H1 (cell line): ENCODE measurements at regions of chr1 and their contacts with region 1.

Region 1: DNA sequence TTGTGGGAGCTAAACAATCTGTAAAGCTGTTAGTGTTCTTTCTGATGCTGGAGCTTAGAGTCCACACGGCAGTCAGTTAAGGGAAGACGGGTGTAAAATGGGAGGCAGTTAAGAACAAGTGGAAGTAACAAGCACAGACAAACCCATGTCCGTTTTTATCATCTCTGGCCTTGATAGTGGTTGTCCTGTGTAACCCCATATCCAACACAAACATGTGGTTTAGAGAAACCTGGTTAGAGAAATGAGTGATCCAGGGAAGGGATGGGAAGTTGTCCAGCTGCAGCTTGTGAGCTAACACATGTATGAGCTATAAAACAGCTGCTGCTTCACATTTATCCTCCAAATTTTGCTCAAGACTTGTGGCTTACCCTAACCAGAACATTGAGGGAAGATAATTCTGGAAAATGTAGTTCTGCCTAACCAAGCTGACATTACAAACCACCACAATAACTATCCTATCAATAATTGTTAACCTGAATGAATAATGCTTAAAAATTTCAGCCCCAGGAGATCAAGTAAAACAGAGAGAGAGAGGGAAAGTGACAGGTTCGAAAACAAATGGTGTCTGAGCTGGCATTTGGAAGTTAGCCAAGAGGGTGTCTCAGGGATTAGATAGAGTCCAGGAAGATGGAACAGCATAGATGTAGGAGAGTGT is 10.6 kb upstream of the C1orf162 start:
- DNase-seq: no peak
- H3K4me3 ChIP-seq: no peak overlapping the region
- H3K27ac ChIP-seq: no peak overlapping the region
- H3K4me1 ChIP-seq: no peaks in the 10 kb centered on the region
- H3K27me3 ChIP-seq: no peaks in the 10 kb centered on the region
- CTCF ChIP-seq: no peak
- EP300 ChIP-seq: no peak
- POLR2A ChIP-seq: no peak
- RAD21 ChIP-seq: no peak

Region 2: GRCh38 chr1:111448918-111449702 is 14.0 kb before region 1 on chr1 and contains the starts of genes ATP5PB and WDR77:
- CTCF ChIA-PET with region 1: interaction called, 4 read pairs
- POLR2A ChIA-PET with region 1: interaction called, 13 read pairs
- DNase-seq: peak; percentile 83 to 94
- H3K4me3 ChIP-seq: peak within 1 kb of the TSS; percentile 86 to 100 (median 99)
- H3K27ac ChIP-seq: peak within 1 kb of the TSS; percentile 85
- H3K4me1 ChIP-seq: peaks cover 0 to 2% (median 1%) of the 10 kb centered on the region in 4 experiments; a peak in 3 of 7 replicates
- H3K27me3 ChIP-seq: no peaks in the 10 kb centered on the region
- CTCF ChIP-seq: no peak
- EP300 ChIP-seq: no peak
- POLR2A ChIP-seq: peak; percentile 2 to 58; a peak in 2 of 3 replicates
- RAD21 ChIP-seq: no peak
- total RNA-seq, gene ATP5PB: 252 and 262 TPM in 2 replicates
- total RNA-seq, gene WDR77: 61.6 and 66.0 TPM in 2 replicates